Mammary epithelial cell (primary cell): ENCODE measurements at regions of chr20 and their contacts with region 1.

Region 1: DNA sequence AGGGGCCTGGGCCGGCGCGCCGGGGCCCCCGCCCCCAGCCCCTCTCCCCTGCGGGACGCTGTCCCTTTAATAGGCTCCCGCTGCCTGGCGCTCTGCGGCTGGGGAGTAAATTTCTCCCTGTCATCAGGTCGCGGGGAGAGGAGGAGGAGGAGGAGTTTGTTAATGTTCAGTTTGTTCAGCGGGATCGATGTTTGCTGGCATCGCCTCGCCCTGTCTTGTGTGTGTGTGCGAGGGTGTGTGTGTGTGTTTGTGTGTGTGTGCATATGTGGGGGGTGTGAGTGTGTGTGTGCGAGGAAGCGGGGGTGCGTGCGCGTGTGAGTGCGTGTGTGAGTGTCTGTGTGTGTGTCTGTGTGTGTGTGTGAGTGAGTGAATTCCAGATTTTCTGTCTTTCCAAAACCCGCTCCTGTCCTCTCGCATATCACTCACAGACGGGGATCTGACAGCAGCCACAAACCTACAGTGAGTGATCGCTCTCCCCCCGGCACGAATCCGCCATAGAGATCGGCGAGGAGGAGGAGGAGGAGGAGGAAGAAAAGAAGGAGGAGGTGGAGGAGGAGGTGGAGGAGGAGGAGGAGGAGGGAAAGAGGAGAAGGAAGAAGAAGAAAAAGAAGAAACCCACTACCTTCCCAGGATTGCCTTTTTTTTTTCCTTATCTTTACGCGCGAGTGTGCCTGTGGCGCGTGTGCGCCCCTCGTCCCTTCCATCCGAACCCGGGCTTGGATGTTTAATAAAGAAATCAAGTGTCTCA is at the start of gene TSHZ2:
- DNase-seq: peak; percentile 81
- H3K4me3 ChIP-seq: peak within 1 kb of the TSS; percentile 82 to 92 (median 85)
- H3K27ac ChIP-seq: peak within 1 kb of the TSS; percentile 83
- H3K4me1 ChIP-seq: peaks cover 17% of the 10 kb centered on the region
- H3K27me3 ChIP-seq: no peaks in the 10 kb centered on the region
- CTCF ChIP-seq: no peak
- total RNA-seq, gene TSHZ2: 10.0 to 11.5 TPM

Region 2: DNA sequence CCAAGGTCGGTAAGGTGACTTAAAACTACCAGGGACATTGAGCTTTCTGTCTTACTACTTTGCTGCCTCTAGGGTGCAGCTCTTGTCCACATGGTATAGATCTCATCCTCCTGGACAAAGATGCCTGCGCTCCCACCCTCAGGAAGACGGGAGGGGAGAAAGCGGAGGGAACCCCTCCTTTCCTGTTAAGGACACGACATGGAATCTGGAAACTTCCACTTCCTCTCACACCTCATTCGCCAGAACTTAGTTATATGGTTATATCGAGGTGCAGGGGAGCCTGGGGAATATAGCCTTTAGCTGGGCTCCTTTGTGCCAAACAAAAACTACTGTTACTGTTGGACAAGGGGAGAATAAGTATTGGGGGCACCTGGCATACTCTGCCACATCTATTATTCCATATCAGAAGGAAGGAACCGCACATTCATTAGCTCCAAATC is 224.5 kb before region 1 on chr20:
- CTCF ChIA-PET with region 1: no interaction called
- dilution Hi-C with region 1: no loop called
- in situ Hi-C with region 1: loop called in 1 of 2 experiments (anchors 10 kb)
- intact Hi-C with region 1: loop called (anchors 1 kb)
- DNase-seq: no peak
- H3K4me3 ChIP-seq: no peak overlapping the region
- H3K27ac ChIP-seq: no peak overlapping the region
- H3K4me1 ChIP-seq: peaks cover 3% of the 10 kb centered on the region
- H3K27me3 ChIP-seq: no peaks in the 10 kb centered on the region
- CTCF ChIP-seq: peak; percentile 30 to 69

Region 3: DNA sequence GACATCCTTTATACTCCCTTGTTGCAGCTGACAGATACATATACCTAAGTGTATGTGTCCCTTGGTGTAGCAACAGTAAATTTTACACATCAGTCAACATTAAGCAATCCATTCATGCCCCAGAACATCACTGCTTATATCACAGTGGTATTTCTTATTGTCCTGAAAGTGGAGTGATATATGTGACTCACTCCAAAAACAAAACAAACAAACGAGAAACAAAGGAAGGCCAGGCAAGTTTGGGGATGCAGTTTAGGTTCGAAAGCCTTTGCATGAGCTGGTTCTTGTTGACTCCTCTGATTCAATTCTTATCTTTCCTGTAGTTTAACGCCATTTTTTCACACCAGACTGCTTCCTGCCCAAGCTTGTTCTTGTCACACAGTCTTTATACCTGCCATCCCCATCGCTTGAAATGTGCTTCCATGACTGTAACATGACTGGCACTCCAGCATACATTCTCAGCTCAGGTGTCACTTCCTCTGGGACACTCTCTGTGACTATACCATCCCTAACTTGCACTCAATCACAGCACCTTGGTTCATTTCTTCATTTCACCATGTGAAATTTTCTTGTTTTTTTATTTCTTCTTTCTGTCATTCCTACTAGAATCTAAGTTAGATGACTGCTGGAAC is 125.2 kb before region 1 on chr20:
- CTCF ChIA-PET with region 1: no interaction called
- dilution Hi-C with region 1: no loop called
- in situ Hi-C with region 1: no loop called
- intact Hi-C with region 1: loop called (anchors 5 kb)
- DNase-seq: peak; percentile 79
- H3K4me3 ChIP-seq: no peak overlapping the region
- H3K27ac ChIP-seq: peak overlapping the region; percentile 58
- H3K4me1 ChIP-seq: peaks cover 12% of the 10 kb centered on the region
- H3K27me3 ChIP-seq: no peaks in the 10 kb centered on the region
- CTCF ChIP-seq: no peak

Region 4: DNA sequence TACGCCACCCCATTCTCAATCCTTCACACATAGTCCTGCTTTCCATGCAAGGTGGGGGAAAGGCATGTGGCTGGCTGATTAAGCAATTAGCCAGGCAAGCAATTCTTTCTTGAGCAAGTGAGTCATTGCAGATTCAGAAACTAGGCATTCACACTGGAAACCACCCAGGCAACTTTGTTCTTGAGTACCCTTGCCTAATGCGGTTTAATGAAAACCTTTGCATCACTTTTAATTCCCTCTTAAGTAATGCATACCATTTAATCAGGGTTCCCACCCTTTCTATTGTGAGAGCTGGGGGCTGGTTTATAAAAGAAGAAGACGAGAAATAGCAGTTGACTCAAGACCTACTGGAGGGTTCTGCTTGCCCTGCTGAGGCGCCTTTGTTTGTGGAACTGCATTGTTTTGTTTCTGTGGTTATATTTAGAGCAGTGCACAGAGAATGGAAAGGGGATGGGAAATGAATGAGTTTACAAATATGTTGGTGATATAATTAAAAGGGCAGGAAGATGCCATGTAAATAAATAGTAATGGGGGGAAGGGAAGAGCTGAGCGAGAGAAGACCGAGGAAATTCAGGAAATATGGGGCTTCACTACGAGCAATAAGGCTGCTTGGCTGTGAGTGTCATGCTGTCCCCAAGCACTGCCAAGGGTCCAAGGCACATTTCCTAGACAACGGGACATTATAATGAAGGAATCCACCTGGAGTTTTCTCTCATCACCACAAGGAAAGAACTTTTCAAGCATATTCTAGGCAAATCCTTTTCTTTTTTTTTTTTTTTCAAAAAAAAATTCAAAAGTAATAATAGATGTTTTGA is 49.0 kb before region 1 on chr20:
- CTCF ChIA-PET with region 1: no interaction called
- dilution Hi-C with region 1: no loop called
- in situ Hi-C with region 1: no loop called
- intact Hi-C with region 1: loop called (anchors 1 kb)
- DNase-seq: peak; percentile 99
- H3K4me3 ChIP-seq: no peak overlapping the region
- H3K27ac ChIP-seq: peak overlapping the region; percentile 91
- H3K4me1 ChIP-seq: peaks cover 28% of the 10 kb centered on the region
- H3K27me3 ChIP-seq: no peaks in the 10 kb centered on the region
- CTCF ChIP-seq: peak in 1 of 2 donors; percentile 18

Region 5: GRCh38 chr20:53080969-53081871 is 108.9 kb after region 1 on chr20:
- CTCF ChIA-PET with region 1: no interaction called
- dilution Hi-C with region 1: no loop called
- in situ Hi-C with region 1: no loop called
- intact Hi-C with region 1: loop called (anchors 2 kb)
- DNase-seq: peak; percentile 81
- H3K4me3 ChIP-seq: peak overlapping the region; percentile 16 to 32 (median 26)
- H3K27ac ChIP-seq: peak overlapping the region; percentile 87
- H3K4me1 ChIP-seq: peaks cover 33% of the 10 kb centered on the region
- H3K27me3 ChIP-seq: no peaks in the 10 kb centered on the region
- CTCF ChIP-seq: no peak

Region 6: DNA sequence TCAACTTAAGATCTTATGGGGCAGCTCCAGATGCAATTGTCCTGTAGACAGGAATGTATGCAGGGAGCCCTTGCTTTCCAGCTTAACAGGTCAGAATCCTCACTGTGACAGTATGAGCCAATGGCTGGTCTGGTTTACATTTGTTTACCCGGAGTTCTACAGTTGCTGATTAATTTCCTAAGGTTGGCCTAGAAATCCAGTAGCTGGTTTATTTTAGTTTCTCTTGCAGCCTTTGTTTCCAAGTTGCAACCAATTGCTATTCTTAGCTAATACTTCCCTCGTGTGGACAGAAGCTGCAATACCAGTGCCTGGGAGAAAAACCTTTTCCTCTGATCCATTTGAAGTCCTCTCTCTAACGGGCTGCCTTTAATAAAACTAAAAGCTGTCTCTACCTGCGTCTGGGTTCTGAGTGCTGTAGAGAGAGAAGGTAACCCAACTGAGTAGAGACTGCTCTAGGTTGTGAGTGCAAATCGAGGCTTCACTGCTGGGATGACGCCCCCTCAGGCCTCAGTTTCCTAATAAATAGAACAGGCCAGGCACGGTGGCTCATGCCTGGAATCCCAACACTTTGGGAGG is 575.4 kb after region 1 on chr20:
- CTCF ChIA-PET with region 1: no interaction called
- dilution Hi-C with region 1: no loop called
- in situ Hi-C with region 1: no loop called
- intact Hi-C with region 1: loop called (anchors 5 kb)
- DNase-seq: peak; percentile 41
- H3K4me3 ChIP-seq: no peak overlapping the region
- H3K27ac ChIP-seq: no peak overlapping the region
- H3K4me1 ChIP-seq: no peaks in the 10 kb centered on the region
- H3K27me3 ChIP-seq: no peaks in the 10 kb centered on the region
- CTCF ChIP-seq: peak; percentile 85 to 87